ENCODE measurements at regions of chr5 and their contacts with region 1.

Region 1: DNA sequence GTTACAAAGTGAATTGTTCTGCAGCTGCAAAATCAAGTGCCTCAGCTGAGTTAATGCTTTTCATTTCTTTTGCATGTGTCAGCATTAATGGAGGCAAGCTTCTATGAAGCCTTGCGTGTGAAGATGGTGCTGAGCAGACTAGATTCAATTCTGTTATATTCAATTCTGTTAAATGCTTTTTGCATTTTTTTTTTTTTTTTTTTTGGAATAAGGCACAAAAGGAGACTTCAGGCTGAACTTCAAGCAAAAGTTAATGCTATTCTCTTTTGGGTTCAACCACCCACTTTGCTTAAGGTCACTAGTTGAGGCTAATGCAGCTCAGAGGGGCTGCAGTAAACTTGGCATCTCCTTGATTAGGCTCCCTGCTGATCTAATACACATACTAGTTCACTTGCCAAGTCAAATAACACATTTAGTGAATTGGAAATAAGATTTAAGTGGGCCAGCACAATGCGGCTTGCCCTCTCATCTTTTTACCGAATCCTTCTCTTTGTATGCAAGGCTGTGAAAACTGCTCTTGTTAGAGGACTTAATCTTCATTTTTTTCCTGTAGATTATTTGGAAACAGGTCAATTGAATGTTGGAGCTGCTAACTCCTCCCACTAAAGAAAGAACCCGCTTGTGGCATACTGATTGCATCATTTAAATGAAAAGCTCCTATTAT is 1020.2 kb downstream of the NR2F1-AS1 start:
- DNase-seq: peak; percentile 86
- ATAC-seq: peak; percentile 74
- H3K4me3 ChIP-seq: peak overlapping the region in 1 of 2 experiments; percentile 24; a peak in 1 of 4 replicates
- H3K27ac ChIP-seq: peak overlapping the region; percentile 100
- H3K4me1 ChIP-seq: peaks cover 46% of the 10 kb centered on the region
- H3K27me3 ChIP-seq: no peaks in the 10 kb centered on the region
- CTCF ChIP-seq: no peak

Region 2: DNA sequence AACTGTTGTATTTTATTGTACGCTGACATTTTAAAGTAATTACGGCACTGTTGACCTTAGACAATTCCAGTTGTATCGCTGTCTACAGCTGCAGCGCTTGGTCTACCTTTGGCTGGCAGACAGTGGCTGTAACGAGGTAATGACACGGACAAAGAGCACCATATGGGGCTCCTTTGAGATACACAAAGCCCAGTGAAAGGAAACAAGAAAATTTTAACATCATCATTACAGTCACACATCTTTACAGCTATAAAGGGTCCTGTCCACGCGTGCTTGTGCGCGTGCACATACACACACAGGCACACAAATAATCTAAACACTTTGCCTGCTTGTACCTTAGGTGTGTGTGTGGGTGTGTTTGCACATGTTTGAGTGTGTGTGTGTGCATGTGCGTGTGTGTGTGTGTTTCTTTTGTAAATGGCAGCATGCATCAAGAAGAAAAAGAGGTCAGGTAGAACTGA is 74.2 kb after region 1 on chr5:
- CTCF ChIA-PET with region 1: no interaction called
- POLR2A ChIA-PET with region 1: no interaction called
- in situ Hi-C with region 1: no loop called
- intact Hi-C with region 1: loop called (anchors 5 kb)
- DNase-seq: no peak
- ATAC-seq: no peak
- H3K4me3 ChIP-seq: no peak overlapping the region
- H3K27ac ChIP-seq: peak overlapping the region; percentile 67; the same call in 1 of the 2 replicates
- H3K4me1 ChIP-seq: peaks cover 12% of the 10 kb centered on the region
- H3K27me3 ChIP-seq: no peaks in the 10 kb centered on the region
- CTCF ChIP-seq: no peak

Measured in Panc1 (cell line).